H1 (cell line): ENCODE measurements at regions of chr10 and their contacts with region 1.

Region 1: GRCh38 chr10:90862908-90863514 is 5.2 kb upstream of the HTR7 start:
- DNase-seq: no peak
- H3K4me3 ChIP-seq: no peak overlapping the region
- H3K27ac ChIP-seq: no peak overlapping the region
- H3K4me1 ChIP-seq: peaks cover 0 to 3% (median 0%) of the 10 kb centered on the region in 4 experiments; a peak in 2 of 7 replicates
- H3K27me3 ChIP-seq: no peaks in the 10 kb centered on the region
- CTCF ChIP-seq: peak in 2 of 3 experiments; percentile 54 to 61; a peak in 3 of 4 replicates
- EP300 ChIP-seq: no peak
- POLR2A ChIP-seq: no peak
- RAD21 ChIP-seq: peak; percentile 82 to 84

Region 2: GRCh38 chr10:90745563-90745962 is 117.4 kb before region 1 on chr10:
- CTCF ChIA-PET with region 1: interaction called, 79 read pairs
- POLR2A ChIA-PET with region 1: no interaction called
- DNase-seq: no peak
- H3K4me3 ChIP-seq: no peak overlapping the region
- H3K27ac ChIP-seq: no peak overlapping the region
- H3K4me1 ChIP-seq: no peaks in the 10 kb centered on the region
- H3K27me3 ChIP-seq: no peaks in the 10 kb centered on the region
- CTCF ChIP-seq: no peak
- EP300 ChIP-seq: no peak
- POLR2A ChIP-seq: no peak
- RAD21 ChIP-seq: no peak

Region 3: GRCh38 chr10:90751107-90751997 is 111.7 kb before region 1 on chr10:
- CTCF ChIA-PET with region 1: interaction called, 79 read pairs
- POLR2A ChIA-PET with region 1: no interaction called
- DNase-seq: peak in 1 of 2 experiments; percentile 79
- H3K4me3 ChIP-seq: no peak overlapping the region
- H3K27ac ChIP-seq: no peak overlapping the region
- H3K4me1 ChIP-seq: peaks cover 0 to 2% (median 0%) of the 10 kb centered on the region in 4 experiments; a peak in 2 of 7 replicates
- H3K27me3 ChIP-seq: no peaks in the 10 kb centered on the region
- CTCF ChIP-seq: peak; percentile 35 to 87 (median 73)
- EP300 ChIP-seq: no peak
- POLR2A ChIP-seq: no peak
- RAD21 ChIP-seq: peak; percentile 93 to 96

Region 4: GRCh38 chr10:90779548-90779947 is 83.5 kb before region 1 on chr10:
- CTCF ChIA-PET with region 1: interaction called, 31 read pairs
- POLR2A ChIA-PET with region 1: no interaction called
- DNase-seq: no peak
- H3K4me3 ChIP-seq: no peak overlapping the region
- H3K27ac ChIP-seq: no peak overlapping the region
- H3K4me1 ChIP-seq: peaks cover 0 to 10% (median 3%) of the 10 kb centered on the region in 4 experiments; a peak in 4 of 7 replicates
- H3K27me3 ChIP-seq: no peaks in the 10 kb centered on the region
- CTCF ChIP-seq: peak in 2 of 3 experiments; percentile 50 to 77; a peak in 3 of 4 replicates
- EP300 ChIP-seq: no peak
- POLR2A ChIP-seq: no peak
- RAD21 ChIP-seq: peak; percentile 44 to 62

Region 5: DNA sequence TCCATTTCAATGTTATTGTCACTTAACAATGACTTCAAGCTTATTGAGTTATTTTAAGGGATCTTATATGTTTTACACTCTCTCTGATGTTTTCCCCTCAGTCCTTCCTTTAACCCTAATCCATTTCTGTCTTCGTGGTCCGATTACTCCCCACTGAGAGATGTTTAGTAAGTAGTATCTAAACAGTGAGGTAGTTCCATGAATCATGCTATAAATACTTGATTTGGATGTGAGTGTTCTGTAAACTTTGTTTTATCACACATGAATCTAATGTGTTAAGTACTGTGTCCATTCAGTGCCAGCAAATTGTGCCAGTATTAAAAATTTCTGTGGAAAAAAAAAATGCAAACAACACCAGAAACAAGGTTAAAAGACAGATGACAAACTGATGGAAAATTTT is 27.3 kb after region 1 on chr10:
- CTCF ChIA-PET with region 1: no interaction called
- POLR2A ChIA-PET with region 1: no interaction called
- DNase-seq: no peak
- H3K4me3 ChIP-seq: no peak overlapping the region
- H3K27ac ChIP-seq: no peak overlapping the region
- H3K4me1 ChIP-seq: no peaks in the 10 kb centered on the region
- H3K27me3 ChIP-seq: no peaks in the 10 kb centered on the region
- CTCF ChIP-seq: no peak
- EP300 ChIP-seq: no peak
- POLR2A ChIP-seq: no peak
- RAD21 ChIP-seq: no peak